Ascending aorta (tissue), 2 donors: ENCODE measurements at regions of chr13 and their contacts with region 1.

Region 1: GRCh38 chr13:106536244-106537034 is 977 bp upstream of the EFNB2 start:
- DNase-seq: peak in 1 of 2 donors; percentile 93
- H3K4me3 ChIP-seq: peak overlapping the region; percentile 79 to 98
- H3K27ac ChIP-seq: peak overlapping the region; percentile 56 to 64
- H3K4me1 ChIP-seq: no peaks in the 10 kb centered on the region
- H3K27me3 ChIP-seq: no peaks in the 10 kb centered on the region
- CTCF ChIP-seq: peak; percentile 84 to 93 (median 88)

Region 2: DNA sequence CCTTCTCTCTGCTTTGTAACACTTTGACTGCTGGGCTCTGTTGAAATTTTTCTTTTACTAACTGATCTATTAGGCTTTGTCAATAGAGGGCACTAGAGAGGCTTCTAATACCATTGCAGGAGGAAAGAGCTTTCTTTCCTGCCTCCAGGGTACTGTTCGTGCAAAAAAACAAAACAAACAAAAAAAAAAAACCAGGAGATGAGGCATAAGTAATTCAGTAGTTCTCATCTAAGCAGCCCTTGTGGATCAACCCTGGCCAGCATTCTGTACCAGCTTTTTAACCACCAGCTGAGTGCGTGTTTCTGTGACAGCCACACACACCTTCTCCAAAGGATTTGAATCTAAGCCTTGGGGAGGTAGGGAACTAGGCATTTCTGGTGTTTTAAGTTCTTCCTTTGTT is 1762.7 kb before region 1 on chr13:
- intact Hi-C with region 1: loop called (anchors 10 kb)
- DNase-seq: no peak
- H3K4me3 ChIP-seq: no peak overlapping the region
- H3K27ac ChIP-seq: no peak overlapping the region
- H3K4me1 ChIP-seq: no peaks in the 10 kb centered on the region
- H3K27me3 ChIP-seq: no peaks in the 10 kb centered on the region
- CTCF ChIP-seq: peak; percentile 16 to 42 (median 31)

Region 3: GRCh38 chr13:105336706-105337582 is 1199.5 kb before region 1 on chr13:
- intact Hi-C with region 1: loop called (anchors 5 kb)
- DNase-seq: peak in 1 of 2 donors; percentile 66
- H3K4me3 ChIP-seq: no peak overlapping the region
- H3K27ac ChIP-seq: peak overlapping the region in 1 of 2 donors; percentile 2
- H3K4me1 ChIP-seq: peaks cover 3 to 16% of the 10 kb centered on the region in 2 donors
- H3K27me3 ChIP-seq: no peaks in the 10 kb centered on the region
- CTCF ChIP-seq: no peak

Region 4: GRCh38 chr13:105627270-105627669 is 909.2 kb before region 1 on chr13:
- intact Hi-C with region 1: loop called (anchors 10 kb)
- DNase-seq: no peak
- H3K4me3 ChIP-seq: no peak overlapping the region
- H3K27ac ChIP-seq: no peak overlapping the region
- H3K4me1 ChIP-seq: no peaks in the 10 kb centered on the region
- H3K27me3 ChIP-seq: no peaks in the 10 kb centered on the region
- CTCF ChIP-seq: no peak

Region 5: DNA sequence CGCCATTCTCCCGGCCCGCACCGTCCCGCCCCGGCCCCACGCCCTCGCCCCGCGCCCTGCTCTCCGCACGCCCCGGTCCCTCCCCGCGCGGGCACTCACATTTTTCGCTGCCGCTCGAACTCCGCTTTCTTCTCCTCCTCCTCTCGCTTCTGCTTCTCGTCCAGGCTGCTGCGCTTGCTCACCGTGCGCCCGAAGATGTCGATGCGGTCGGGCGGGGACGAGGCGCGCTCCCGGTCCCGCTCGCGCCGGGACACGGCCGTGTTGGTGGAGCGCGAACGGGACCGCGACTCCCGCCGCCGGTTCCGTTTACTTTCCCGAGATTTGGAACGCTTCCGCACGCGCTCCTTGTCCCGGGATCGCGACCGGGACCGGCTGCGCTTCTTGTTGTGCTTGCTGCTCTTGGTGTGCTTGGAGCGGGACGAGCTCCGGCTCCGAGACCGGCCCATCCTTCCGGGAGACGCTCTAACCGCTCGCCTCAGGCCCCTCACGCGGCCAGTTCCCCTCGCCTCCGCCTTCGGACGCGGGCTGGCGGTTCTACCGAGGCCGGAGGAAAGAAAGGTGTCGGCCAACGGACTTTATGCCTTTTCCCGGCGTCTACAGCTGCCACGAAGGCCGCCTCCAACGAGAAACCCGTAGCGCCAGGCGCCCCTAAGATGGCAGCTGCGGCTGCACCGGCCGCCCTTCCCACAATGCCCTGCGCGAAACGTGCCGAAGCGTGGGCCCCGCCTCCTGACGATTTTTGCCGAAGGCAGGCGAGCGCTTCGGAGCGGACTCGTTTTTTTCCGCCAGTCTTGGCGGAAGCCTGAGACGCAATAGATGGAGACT is 31.2 kb after region 1 on chr13 and contains the start of gene ARGLU1:
- intact Hi-C with region 1: loop called (anchors 1 kb)
- DNase-seq: peak; percentile 61 to 96
- H3K4me3 ChIP-seq: peak within 1 kb of the TSS; percentile 83 to 93
- H3K27ac ChIP-seq: peak within 1 kb of the TSS; percentile 92 to 96
- H3K4me1 ChIP-seq: peaks cover 0 to 29% of the 10 kb centered on the region in 2 donors
- H3K27me3 ChIP-seq: no peaks in the 10 kb centered on the region
- CTCF ChIP-seq: no peak
- total RNA-seq, gene ARGLU1: 79.7 TPM

Region 6: DNA sequence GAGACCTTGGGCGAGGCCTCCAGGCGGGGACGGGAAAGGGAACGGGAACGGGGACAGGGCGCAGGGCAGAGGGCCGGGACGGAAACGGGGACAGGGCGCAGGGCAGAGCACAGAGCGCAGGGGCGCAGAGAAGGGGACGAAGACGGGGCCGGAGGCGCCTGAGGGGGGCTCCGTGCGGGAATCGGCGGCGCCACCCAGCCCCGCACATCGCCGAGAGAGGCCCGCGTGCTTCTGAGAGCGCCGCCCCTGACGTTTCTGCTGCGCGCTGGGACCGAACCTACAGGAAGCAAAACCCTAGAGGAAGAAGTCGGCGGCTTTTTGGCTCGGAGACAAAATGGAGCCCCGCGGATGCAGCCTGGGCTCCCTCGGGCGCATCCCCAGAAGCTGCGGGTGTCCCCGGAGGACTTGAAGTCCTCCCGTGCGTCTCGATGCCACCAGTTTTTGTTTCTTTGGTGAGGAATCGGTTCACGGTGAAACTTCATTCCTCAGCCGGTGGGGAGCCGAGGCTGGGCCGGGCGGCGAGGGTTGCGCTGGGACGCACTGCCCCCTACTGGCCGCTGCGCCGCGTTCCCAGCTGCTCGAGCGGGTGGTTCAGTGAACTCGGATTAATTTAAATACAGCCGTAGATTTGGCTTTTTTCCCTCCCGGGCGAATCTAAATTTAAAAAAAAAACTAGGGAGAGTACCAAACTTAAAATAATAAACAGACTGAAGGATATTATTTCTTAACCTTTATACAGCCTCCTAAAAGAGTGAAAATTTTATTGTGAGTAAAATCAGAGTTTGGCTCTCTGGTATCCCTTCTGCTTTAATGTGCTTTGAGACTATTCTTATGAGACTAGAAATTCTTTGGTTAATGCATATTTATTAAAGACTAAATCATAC is 381.5 kb after region 1 on chr13:
- intact Hi-C with region 1: loop called (anchors 2 kb)
- DNase-seq: peak in 1 of 2 donors; percentile 88
- H3K4me3 ChIP-seq: peak overlapping the region; percentile 69 to 82
- H3K27ac ChIP-seq: peak overlapping the region; percentile 87 to 98
- H3K4me1 ChIP-seq: peaks cover 5 to 18% of the 10 kb centered on the region in 2 donors
- H3K27me3 ChIP-seq: no peaks in the 10 kb centered on the region
- CTCF ChIP-seq: peak; percentile 81 to 97 (median 94)